ENCODE measurements at regions of chr13 and their contacts with region 1.

Region 1: DNA sequence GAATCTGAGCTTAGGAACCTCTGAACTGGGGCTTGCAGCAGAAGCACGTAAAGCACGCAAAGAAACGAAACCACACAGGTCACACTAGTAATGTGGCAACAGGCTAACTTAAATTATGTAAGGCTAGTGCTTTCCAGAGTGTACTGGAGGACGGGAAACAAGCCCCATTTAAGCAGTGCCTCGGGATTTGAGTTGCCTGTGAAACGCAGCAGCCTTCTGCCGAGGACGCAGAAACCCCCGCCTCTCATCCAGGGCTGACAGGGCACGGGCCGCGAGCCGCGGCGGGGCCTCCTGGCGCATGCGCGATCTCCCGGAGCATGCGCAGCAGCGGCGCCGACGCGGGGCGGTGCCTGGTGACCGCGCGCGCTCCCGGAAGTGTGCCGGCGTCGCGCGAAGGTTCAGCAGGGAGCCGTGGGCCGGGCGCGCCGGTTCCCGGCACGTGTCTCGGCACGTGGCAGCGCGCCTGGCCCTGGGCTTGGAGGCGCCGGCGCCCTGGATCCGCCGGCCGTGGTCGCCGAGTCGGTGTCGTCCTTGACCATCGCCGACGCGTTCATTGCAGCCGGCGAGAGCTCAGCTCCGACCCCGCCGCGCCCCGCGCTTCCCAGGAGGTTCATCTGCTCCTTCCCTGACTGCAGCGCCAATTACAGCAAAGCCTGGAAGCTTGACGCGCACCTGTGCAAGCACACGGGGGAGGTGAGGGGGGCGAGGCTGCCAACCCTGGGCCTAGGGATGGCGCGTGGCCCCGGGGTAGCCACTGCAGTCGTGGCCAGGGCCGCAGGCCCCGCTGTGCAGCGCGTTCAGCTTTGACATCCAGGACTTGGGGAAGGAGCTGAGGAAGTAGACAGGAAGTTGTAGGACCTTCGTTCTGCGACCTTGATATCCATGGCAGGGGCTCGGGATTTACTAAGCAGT is at the start of gene GTF3A:
- DNase-seq: peak; percentile 91 to 96
- ATAC-seq: peak; percentile 64 to 83 (median 78)
- H3K4me3 ChIP-seq: peak within 1 kb of the TSS; percentile 83
- H3K4me3 Mint-ChIP-seq: peak within 1 kb of the TSS; percentile 87
- H3K27ac ChIP-seq: peak within 1 kb of the TSS; percentile 88
- H3K27ac Mint-ChIP-seq: peak within 1 kb of the TSS; percentile 92 to 94
- H3K4me1 ChIP-seq: peaks cover 48% of the 10 kb centered on the region
- H3K4me1 Mint-ChIP-seq: peaks cover 40 to 42% of the 10 kb centered on the region in 2 donors
- H3K27me3 ChIP-seq: no peaks in the 10 kb centered on the region
- H3K27me3 Mint-ChIP-seq: no peaks in the 10 kb centered on the region
- CTCF ChIP-seq: no peak
- total RNA-seq, gene GTF3A: 129 to 132 (median 130) TPM

Region 2: GRCh38 chr13:27440408-27440807 is 15.9 kb after region 1 on chr13:
- intact Hi-C with region 1: loop called (anchors 2 kb)
- DNase-seq: peak in 1 of 2 donors; percentile 18
- ATAC-seq: peak; percentile 67 to 69 (median 69)
- H3K4me3 ChIP-seq: no peak overlapping the region
- H3K4me3 Mint-ChIP-seq: peak overlapping the region; percentile 68
- H3K27ac ChIP-seq: no peak overlapping the region
- H3K27ac Mint-ChIP-seq: peak overlapping the region; percentile 53 to 78
- H3K4me1 ChIP-seq: peaks cover 34% of the 10 kb centered on the region
- H3K4me1 Mint-ChIP-seq: peaks cover 43 to 44% of the 10 kb centered on the region in 2 donors
- H3K27me3 ChIP-seq: no peaks in the 10 kb centered on the region
- H3K27me3 Mint-ChIP-seq: no peaks in the 10 kb centered on the region
- CTCF ChIP-seq: no peak

Region 3: DNA sequence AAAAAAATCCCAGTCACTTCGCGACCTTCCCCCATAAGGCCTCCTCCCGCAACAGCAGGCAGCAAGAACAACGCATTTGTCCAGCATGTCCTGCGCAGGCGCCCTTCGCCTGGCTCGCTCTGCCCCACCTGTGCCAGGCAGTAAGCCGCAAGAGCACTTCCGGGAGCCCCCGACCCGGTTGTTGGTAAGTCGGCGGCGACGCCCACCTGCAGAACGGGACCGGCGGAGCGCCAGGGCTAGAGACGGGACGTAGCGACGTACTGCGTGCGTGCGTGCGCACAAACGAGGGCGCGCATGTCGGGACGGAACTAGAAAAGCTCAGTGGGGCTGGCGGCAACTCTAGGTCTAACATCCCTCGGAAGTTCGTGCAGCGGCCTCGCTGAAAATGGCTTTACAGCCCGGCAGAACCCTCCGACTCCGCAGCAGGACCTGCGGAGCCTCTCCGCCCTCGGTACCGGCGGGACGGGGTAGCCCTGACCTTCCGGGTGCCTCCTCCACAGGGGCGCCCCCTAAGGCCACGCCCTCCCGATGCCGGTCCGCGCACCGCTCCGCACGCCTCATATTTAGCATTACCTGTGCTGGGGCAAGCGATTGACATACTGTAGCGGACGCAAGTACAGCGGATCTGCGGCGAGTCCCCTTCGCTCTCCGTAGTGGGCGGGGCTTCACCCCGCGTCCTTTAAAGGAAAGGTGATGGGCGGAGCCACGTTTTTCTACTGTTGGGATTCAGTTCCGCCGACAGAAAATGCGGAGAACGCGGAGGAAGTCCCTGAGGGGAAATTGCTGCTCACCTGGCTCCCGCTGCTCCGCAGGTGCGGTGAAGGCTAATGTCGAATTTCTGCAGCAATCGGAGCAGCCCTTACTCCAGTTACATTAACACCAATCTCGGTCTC is 25.7 kb after region 1 on chr13 and contains the start of gene MTIF3:
- intact Hi-C with region 1: loop called (anchors 1 kb)
- DNase-seq: peak; percentile 87 to 99
- ATAC-seq: peak; percentile 81 to 93 (median 83)
- H3K4me3 ChIP-seq: peak within 1 kb of the TSS; percentile 84
- H3K4me3 Mint-ChIP-seq: peak within 1 kb of the TSS; percentile 95
- H3K27ac ChIP-seq: peak within 1 kb of the TSS; percentile 94
- H3K27ac Mint-ChIP-seq: peak within 1 kb of the TSS; percentile 97 to 98
- H3K4me1 ChIP-seq: peaks cover 20% of the 10 kb centered on the region
- H3K4me1 Mint-ChIP-seq: peaks cover 44 to 49% of the 10 kb centered on the region in 2 donors
- H3K27me3 ChIP-seq: no peaks in the 10 kb centered on the region
- H3K27me3 Mint-ChIP-seq: no peaks in the 10 kb centered on the region
- CTCF ChIP-seq: no peak
- total RNA-seq, gene MTIF3: 30.2 to 56.6 (median 36.8) TPM

Region 4: DNA sequence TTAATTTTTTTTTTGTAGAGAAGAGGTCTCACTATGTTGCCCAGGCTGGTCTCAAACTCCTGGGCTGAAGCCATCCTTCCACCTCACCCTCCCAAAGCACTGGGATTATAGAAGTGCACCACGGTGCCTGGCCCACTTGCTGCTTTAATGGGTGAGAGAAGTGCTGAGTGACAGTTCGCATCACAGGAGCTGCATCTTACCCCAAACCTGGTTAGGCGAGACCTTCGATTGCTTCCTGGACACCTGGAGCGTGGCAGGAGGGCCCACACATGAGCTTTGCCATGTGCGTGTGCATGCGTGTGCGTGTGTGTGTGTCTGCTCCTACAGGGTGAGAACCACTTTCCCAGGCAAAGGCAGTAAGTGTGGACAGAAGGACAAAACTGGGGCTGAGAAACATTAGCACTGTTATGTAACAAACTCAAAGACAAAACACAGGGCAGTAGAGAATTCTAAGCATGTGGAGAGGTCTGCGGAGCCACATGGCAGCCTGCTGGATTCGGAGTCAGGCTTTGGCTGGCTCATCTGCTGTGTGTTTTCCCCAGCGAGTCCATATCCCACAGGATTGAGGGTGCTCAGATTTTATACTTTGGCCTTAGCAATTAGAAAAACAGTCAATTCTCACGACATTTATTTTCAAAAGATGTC is 37.6 kb after region 1 on chr13:
- intact Hi-C with region 1: loop called (anchors 5 kb)
- DNase-seq: no peak
- ATAC-seq: no peak
- H3K4me3 ChIP-seq: no peak overlapping the region
- H3K4me3 Mint-ChIP-seq: no peak overlapping the region
- H3K27ac ChIP-seq: no peak overlapping the region
- H3K27ac Mint-ChIP-seq: no peak overlapping the region
- H3K4me1 ChIP-seq: peaks cover 6% of the 10 kb centered on the region
- H3K4me1 Mint-ChIP-seq: peaks cover 0 to 5% of the 10 kb centered on the region in 2 donors
- H3K27me3 ChIP-seq: no peaks in the 10 kb centered on the region
- H3K27me3 Mint-ChIP-seq: peaks cover 0 to 3% of the 10 kb centered on the region in 2 donors
- CTCF ChIP-seq: no peak

Region 5: DNA sequence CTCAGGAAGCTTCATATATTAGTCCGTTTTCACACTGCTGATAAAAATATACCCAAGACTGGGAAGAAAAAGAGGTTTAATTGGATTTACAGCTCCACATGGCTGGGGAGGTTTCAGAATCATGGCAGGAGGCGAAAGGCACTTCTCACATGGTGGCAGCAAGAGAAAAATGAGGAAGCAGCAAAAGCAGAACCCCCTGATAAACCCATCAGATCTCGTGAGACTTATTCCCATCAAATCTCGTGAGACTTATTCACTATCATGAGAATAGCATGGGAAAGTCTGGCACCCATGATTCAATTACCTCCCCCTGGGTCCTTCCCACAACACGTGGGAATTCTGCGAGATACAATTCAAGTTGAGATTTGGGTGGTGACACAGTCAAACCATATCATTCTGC is 652.7 kb after region 1 on chr13:
- intact Hi-C with region 1: no loop called
- DNase-seq: no peak
- ATAC-seq: no peak
- H3K4me3 ChIP-seq: no peak overlapping the region
- H3K4me3 Mint-ChIP-seq: no peak overlapping the region
- H3K27ac ChIP-seq: no peak overlapping the region
- H3K27ac Mint-ChIP-seq: no peak overlapping the region
- H3K4me1 ChIP-seq: no peaks in the 10 kb centered on the region
- H3K4me1 Mint-ChIP-seq: no peaks in the 10 kb centered on the region
- H3K27me3 ChIP-seq: no peaks in the 10 kb centered on the region
- H3K27me3 Mint-ChIP-seq: no peaks in the 10 kb centered on the region
- CTCF ChIP-seq: no peak

Region 6: GRCh38 chr13:29384871-29385270 is 1960.4 kb after region 1 on chr13:
- intact Hi-C with region 1: no loop called
- DNase-seq: no peak
- ATAC-seq: no peak
- H3K4me3 ChIP-seq: no peak overlapping the region
- H3K4me3 Mint-ChIP-seq: no peak overlapping the region
- H3K27ac ChIP-seq: no peak overlapping the region
- H3K27ac Mint-ChIP-seq: no peak overlapping the region
- H3K4me1 ChIP-seq: no peaks in the 10 kb centered on the region
- H3K4me1 Mint-ChIP-seq: no peaks in the 10 kb centered on the region
- H3K27me3 ChIP-seq: no peaks in the 10 kb centered on the region
- H3K27me3 Mint-ChIP-seq: no peaks in the 10 kb centered on the region
- CTCF ChIP-seq: no peak